Activated T-helper 1 cell treated with anti-CD3 and anti-CD28 coated beads, Interleukin-12 subunit alpha, Interleukin-12 subunit beta, Interleukin-2, Interleukin-4 antibody, amounts not matched to agents 30 ng/mL and 10 ng/mL and 1 ng/mL, durations not matched to agents 14 hours and 24 hours and 36 hours (primary cell): ENCODE measurements at regions of chr2 and their contacts with region 1.

Region 1: DNA sequence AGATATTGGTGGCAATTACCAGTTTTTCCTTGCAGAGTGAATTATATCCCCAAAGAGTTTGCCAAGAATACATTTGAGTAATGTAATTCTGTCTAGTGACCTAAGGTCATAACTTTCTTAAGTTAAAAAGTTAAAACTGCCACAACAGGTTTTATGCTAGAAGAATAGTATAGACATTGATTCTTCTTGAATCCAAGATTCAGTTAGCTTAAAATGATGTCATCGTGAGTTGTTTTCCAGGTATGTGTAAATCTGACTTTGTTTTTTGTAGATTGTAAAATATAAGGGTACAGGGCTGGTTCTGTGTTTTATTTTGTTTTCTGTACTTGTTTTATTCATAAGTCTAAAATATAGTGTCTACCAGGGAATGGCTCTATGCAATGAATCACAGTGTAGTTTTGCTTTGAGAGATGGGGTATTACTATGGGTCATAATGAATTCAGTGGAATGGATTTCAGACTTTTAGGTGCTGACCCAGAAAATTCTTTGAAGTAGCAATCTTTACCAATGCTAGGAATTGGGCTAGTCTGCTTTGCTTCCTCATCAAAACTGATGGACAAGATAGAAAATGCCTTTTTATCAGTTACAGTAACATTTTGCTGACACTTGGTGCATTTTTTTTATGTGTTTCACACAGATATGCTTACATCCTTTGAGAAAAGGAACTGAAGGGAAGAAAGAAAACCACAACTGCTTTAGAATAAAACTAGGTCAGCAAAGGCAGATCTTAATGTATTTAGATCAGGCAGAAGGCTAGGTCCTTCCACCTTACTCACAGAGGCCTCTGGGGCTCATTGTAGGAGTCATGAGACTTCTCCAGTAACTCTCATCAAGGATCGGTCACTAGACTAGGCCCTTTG is 20.8 kb upstream of the MGAT5 start:
- DNase-seq: no peak
- H3K4me3 Mint-ChIP-seq: peak overlapping the region; percentile 53
- H3K27ac Mint-ChIP-seq: peak overlapping the region; percentile 64
- H3K4me1 Mint-ChIP-seq: peaks cover 70% of the 10 kb centered on the region
- H3K27me3 Mint-ChIP-seq: peaks cover 2% of the 10 kb centered on the region

Region 2: DNA sequence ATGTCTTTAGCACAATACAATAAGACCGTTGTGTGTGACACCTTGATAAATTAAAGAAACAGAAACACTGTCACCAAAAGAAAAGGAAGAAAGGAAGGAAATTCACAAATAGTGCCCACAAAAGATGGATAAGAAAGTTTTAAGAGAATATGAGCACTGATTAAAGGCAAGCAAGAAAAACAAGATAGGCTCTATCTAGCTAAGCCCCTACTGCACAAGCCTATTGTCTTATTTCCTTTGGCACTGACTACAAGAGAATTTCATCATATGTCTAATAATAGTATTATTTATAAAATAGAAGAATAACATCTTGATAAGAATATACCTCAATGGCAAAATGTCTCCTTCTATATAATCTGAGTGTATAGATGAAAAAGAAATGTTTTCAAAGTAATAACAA is 1000.5 kb before region 1 on chr2:
- intact Hi-C with region 1: no loop called
- DNase-seq: no peak
- H3K4me3 Mint-ChIP-seq: no peak overlapping the region
- H3K27ac Mint-ChIP-seq: no peak overlapping the region
- H3K4me1 Mint-ChIP-seq: no peaks in the 10 kb centered on the region
- H3K27me3 Mint-ChIP-seq: no peaks in the 10 kb centered on the region

Region 3: DNA sequence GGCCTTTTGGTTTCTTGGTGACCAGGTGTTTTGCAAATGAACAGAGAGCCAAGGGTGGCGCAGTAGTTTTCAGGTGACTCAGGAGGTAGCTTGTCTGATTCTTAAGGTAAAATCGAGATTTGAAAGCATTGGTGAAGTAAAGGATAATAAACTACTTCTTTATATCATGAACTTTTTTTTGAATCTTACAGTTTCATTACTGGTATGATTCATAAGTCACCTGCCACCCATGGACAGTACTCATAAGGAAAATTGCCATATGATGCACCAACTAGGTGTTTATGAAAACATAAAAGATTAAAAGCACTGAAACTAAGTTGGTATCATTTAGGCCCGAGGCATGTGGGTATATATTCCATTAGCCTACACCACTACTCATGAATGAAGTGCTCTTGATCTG is 63.3 kb before region 1 on chr2:
- intact Hi-C with region 1: loop called (anchors 1 kb)
- DNase-seq: no peak
- H3K4me3 Mint-ChIP-seq: no peak overlapping the region
- H3K27ac Mint-ChIP-seq: peak overlapping the region; percentile 47
- H3K4me1 Mint-ChIP-seq: peaks cover 17% of the 10 kb centered on the region
- H3K27me3 Mint-ChIP-seq: no peaks in the 10 kb centered on the region

Region 4: DNA sequence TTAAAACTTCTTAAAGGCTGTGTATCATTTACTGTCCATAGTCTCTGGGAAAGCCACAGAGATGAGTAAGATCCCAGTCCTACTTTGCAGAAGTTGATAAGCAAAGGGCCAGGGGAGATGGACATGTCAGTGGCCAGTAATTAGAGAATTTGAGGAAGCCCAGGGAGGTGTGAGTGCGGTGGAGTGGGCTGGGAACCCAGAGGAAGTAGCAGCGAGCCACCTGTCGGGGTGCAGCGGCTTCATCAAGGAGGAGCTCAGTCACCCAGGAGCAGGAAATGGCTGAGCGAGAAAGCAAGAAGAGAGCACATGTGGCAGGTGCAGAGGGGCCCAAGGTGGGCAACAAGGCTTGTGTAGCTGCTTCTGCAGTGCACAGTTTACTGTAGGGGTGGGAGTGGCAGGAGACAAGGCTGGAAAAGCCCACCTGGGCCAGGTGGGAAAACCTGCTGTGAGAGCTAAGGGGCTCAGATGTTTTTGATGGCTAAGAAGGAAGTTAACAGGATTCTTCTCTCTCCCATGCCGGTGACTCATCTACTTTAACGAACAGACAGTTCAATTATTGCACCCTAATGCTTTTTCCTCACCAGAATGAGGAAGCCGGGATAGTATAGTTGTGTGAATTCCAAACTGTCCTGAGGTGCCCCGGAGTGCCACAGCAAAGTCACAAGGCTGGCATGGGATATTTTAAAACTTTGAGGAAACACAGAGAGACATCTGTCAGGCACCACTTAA is 14.0 kb before region 1 on chr2:
- intact Hi-C with region 1: loop called (anchors 1 kb)
- DNase-seq: peak; percentile 11
- H3K4me3 Mint-ChIP-seq: no peak overlapping the region
- H3K27ac Mint-ChIP-seq: peak overlapping the region; percentile 75
- H3K4me1 Mint-ChIP-seq: peaks cover 40% of the 10 kb centered on the region
- H3K27me3 Mint-ChIP-seq: peaks cover 9% of the 10 kb centered on the region

Region 5: DNA sequence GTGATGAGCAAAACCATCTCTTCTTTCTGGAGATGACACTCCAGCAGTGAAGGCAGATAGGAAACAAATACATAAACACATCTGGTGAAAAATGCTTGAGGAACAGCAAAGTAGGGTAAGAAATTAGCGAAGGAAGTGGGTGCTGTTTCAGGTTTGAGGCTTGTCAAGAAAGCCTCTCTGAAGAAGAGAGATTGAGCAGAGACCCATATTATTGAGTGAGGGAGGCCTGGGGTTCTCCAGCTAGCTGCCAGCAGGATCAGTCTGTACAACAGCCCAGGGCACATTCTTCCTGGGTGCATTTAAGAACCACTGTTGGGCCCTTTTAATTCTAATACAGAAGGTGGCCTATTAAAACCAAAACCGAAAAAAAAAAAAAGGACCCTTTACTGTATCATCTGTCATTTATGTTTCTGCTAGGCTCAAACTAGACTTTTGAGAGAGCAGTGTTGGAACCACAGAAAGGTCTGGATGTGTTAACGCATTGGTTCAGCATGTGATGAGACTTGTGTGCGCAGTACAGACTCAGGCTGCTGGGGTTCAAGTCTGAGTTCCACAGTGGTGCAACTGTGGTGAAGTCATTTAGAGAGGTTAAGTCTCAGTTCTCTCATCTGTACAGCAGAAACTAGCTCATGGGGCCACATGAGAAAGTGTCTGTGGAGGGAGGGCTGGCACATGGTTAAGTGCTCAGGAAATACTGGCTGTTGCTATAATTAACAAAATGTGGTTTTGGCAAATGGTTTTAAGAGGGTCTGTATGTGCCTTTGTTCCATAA is 49.7 kb after region 1 on chr2:
- intact Hi-C with region 1: loop called (anchors 1 kb)
- DNase-seq: peak; percentile 16
- H3K4me3 Mint-ChIP-seq: peak overlapping the region; percentile 20
- H3K27ac Mint-ChIP-seq: peak overlapping the region; percentile 63
- H3K4me1 Mint-ChIP-seq: peaks cover 33% of the 10 kb centered on the region
- H3K27me3 Mint-ChIP-seq: peaks cover 20% of the 10 kb centered on the region

Region 6: GRCh38 chr2:134683561-134684112 is 450.5 kb after region 1 on chr2:
- intact Hi-C with region 1: loop called (anchors 1 kb)
- DNase-seq: no peak
- H3K4me3 Mint-ChIP-seq: no peak overlapping the region
- H3K27ac Mint-ChIP-seq: no peak overlapping the region
- H3K4me1 Mint-ChIP-seq: peaks cover 53% of the 10 kb centered on the region
- H3K27me3 Mint-ChIP-seq: peaks cover 12% of the 10 kb centered on the region